Vagina (tissue), 2 donors: ENCODE measurements at regions of chr16 and their contacts with region 1.

Region 1: GRCh38 chr16:17334096-17334495 is 136.7 kb downstream of the XYLT1 start:
- DNase-seq: no peak
- H3K4me3 ChIP-seq: no peak overlapping the region
- H3K27ac ChIP-seq: peak overlapping the region; percentile 66
- H3K4me1 ChIP-seq: peaks cover 48% of the 10 kb centered on the region
- H3K27me3 ChIP-seq: no peaks in the 10 kb centered on the region
- CTCF ChIP-seq: no peak
- POLR2A ChIP-seq: no peak

Region 2: DNA sequence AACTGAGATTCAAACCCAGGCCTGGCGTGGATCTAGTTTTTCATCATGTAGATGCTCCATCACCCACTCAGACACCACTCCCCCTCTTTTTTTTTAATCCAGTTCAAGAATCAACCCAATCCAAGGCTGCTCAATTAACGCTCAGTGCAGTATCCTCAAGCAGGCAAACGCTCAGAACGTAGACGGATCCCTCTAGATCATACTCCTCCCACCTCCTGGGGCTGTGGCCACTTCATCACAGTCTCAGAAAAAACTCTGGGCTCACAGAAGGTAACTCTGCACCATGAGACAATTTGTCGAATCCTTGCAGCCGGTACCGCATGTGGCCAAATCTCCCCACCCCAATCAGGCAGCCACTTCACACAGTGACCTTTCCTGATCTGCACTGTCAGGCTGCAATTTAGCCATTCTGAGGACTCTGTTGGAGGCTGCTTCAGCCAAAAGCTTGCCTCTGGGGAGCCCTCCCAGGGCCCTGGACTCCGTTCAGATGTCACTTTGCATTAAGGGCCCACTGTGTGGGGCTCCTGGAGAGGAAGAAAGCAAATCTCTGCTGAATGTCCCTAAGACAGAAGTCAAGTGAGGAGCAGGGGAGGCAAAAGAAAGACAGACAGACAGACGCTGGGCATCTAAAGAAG is 46.8 kb before region 1 on chr16:
- intact Hi-C with region 1: no loop called
- DNase-seq: no peak
- H3K4me3 ChIP-seq: no peak overlapping the region
- H3K27ac ChIP-seq: no peak overlapping the region
- H3K4me1 ChIP-seq: peaks cover 5% of the 10 kb centered on the region
- H3K27me3 ChIP-seq: no peaks in the 10 kb centered on the region
- CTCF ChIP-seq: no peak
- POLR2A ChIP-seq: no peak

Region 3: DNA sequence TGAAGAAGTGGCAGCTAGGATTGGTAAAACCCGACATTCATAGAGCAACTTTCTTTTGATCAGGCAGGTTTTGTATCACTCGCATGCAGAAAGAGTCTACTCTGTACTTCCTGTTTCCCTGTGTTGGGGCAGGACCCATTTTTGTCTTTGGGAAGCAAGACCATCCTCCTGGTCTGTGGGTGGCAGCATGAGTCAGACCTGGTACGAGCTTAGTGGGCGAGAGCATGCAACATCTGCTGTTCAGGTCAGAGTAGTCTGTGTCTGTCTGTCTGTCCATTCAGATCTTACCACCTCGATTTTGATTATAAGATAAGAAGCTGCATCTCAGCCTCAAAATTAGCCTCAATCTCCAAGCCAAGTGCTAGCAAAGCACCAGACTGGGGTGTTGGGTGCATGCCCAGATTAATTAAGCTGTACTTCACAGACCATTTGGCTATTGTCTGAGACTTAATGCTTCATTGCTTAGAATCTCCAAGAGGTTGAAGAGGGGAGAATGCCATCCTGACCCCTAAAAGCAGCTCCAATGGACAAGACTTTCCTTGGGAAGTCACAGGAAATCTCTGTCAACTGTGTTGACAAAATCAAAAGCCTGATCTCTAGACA is 25.8 kb after region 1 on chr16:
- intact Hi-C with region 1: no loop called
- DNase-seq: no peak
- H3K4me3 ChIP-seq: no peak overlapping the region
- H3K27ac ChIP-seq: no peak overlapping the region
- H3K4me1 ChIP-seq: peaks cover 65% of the 10 kb centered on the region
- H3K27me3 ChIP-seq: no peaks in the 10 kb centered on the region
- CTCF ChIP-seq: no peak
- POLR2A ChIP-seq: no peak

Region 4: GRCh38 chr16:17397499-17397891 is 63.4 kb after region 1 on chr16:
- intact Hi-C with region 1: loop called (anchors 5 kb)
- DNase-seq: no peak
- H3K4me3 ChIP-seq: no peak overlapping the region
- H3K27ac ChIP-seq: peak overlapping the region; percentile 49
- H3K4me1 ChIP-seq: peaks cover 50% of the 10 kb centered on the region
- H3K27me3 ChIP-seq: no peaks in the 10 kb centered on the region
- CTCF ChIP-seq: no peak
- POLR2A ChIP-seq: no peak